ENCODE measurements at regions of chr7 and their contacts with region 1.

Region 1: GRCh38 chr7:99631295-99632109 is 14.8 kb downstream of the ZSCAN25 start:
- DNase-seq: peak; percentile 64
- ATAC-seq: peak; percentile 89
- H3K4me3 ChIP-seq: no peak overlapping the region
- H3K27ac ChIP-seq: peak overlapping the region; percentile 10
- H3K4me1 ChIP-seq: peaks cover 24% of the 10 kb centered on the region
- H3K27me3 ChIP-seq: no peaks in the 10 kb centered on the region
- CTCF ChIP-seq: peak; percentile 86
- EP300 ChIP-seq: 0 out of 4 replicates have a peak, but pooled peaks of 1 of the 2 experiments have one; percentile 17
- POLR2A ChIP-seq: no peak
- RAD21 ChIP-seq: peak; percentile 90

Region 2: DNA sequence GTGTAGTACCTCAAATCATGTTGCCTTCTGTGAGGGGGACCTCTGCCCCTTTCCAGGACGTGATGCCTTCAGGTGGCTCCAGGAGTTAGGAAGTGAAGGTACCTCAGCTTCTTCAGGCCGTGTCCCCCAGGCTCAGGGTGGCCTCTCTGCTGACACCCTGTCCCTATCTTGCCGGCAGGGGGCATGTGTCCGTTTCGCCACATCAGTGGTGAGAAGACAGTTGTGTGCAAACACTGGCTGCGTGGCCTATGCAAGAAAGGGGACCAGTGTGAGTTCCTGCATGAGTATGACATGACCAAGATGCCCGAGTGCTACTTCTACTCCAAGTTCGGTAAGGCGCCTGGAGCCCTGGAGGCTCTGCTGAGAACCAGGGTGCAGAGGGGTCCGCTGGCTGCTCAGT is 183.6 kb before region 1 on chr7:
- CTCF ChIA-PET with region 1: no interaction called
- POLR2A ChIA-PET with region 1: no interaction called
- in situ Hi-C with region 1: no loop called
- intact Hi-C with region 1: no loop called
- DNase-seq: peak; percentile 51
- ATAC-seq: peak; percentile 82
- H3K4me3 ChIP-seq: no peak overlapping the region
- H3K27ac ChIP-seq: no peak overlapping the region
- H3K4me1 ChIP-seq: no peaks in the 10 kb centered on the region
- H3K27me3 ChIP-seq: no peaks in the 10 kb centered on the region
- CTCF ChIP-seq: peak; percentile 80
- EP300 ChIP-seq: no peak
- POLR2A ChIP-seq: no peak
- RAD21 ChIP-seq: peak; percentile 47

Region 3: GRCh38 chr7:99616359-99617191 is 14.9 kb before region 1 on chr7 and contains the start of gene ZSCAN25:
- CTCF ChIA-PET with region 1: no interaction called
- POLR2A ChIA-PET with region 1: interaction called, 16 read pairs
- in situ Hi-C with region 1: no loop called
- intact Hi-C with region 1: no loop called
- DNase-seq: peak; percentile 91
- ATAC-seq: peak; percentile 96
- H3K4me3 ChIP-seq: peak within 1 kb of the TSS; percentile 93 to 98 (median 96)
- H3K27ac ChIP-seq: peak within 1 kb of the TSS; percentile 96
- H3K4me1 ChIP-seq: peaks cover 25% of the 10 kb centered on the region
- H3K27me3 ChIP-seq: no peaks in the 10 kb centered on the region; a peak in 1 of 5 replicates
- CTCF ChIP-seq: peak; percentile 97
- EP300 ChIP-seq: no peak
- POLR2A ChIP-seq: peak; percentile 82 to 83
- RAD21 ChIP-seq: peak; percentile 71
- total RNA-seq, gene ZSCAN25: 16.3 and 16.8 TPM in 2 replicates

Region 4: GRCh38 chr7:99837649-99838361 is 206.3 kb after region 1 on chr7:
- CTCF ChIA-PET with region 1: interaction called, 4 read pairs
- POLR2A ChIA-PET with region 1: interaction called, 3 read pairs
- in situ Hi-C with region 1: no loop called
- intact Hi-C with region 1: loop called (anchors 2 kb)
- DNase-seq: peak; percentile 45
- ATAC-seq: peak; percentile 72
- H3K4me3 ChIP-seq: no peak overlapping the region
- H3K27ac ChIP-seq: no peak overlapping the region
- H3K4me1 ChIP-seq: peaks cover 34% of the 10 kb centered on the region
- H3K27me3 ChIP-seq: no peaks in the 10 kb centered on the region
- CTCF ChIP-seq: peak; percentile 74
- EP300 ChIP-seq: no peak
- POLR2A ChIP-seq: no peak
- RAD21 ChIP-seq: peak; percentile 59; the same call in 1 of the 2 replicates

Region 5: DNA sequence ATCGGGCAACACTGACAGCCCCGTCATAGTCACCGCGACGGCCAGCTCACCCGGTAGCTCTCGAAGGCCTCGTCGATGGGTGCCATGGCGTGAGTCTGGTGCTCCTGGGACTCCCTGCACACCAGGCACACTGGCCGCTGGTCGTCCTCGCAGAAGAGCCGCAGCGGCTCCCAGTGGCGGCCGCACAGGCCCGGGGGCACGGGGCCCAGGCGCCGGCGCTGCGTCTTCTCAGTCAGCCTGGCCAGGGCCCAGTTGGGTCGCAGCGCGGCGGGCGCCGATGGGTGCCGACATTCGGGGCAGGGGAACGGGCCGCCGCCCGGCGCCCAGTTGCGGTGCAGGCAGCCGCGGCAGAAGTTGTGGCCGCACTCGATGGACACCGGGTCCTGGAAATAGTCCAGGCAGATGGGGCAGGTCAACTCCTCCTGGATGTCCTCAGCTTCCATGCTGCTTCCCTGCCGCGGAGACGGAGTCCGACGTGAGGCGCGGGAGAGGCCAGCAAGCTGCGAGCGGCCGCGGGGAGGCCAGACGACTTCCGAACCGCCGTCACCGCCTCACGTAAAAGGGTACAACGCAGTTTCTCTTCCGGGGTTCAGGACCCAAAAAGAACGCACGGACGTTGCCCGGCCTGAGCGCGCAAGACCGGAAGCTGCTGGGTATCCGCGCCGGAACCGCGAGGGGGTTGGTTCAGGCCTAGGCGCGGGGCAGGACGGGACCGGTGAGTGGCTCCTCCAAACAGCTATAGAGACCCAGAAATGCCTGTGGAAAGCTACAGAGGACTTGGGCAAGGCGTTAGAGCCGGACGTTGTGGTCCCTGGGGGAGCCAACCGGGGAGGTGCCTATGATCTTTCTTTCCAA is 287.7 kb after region 1 on chr7 and contains the start of gene TRIM4:
- CTCF ChIA-PET with region 1: no interaction called
- POLR2A ChIA-PET with region 1: interaction called, 4 read pairs
- in situ Hi-C with region 1: no loop called
- intact Hi-C with region 1: loop called (anchors 10 kb)
- DNase-seq: peak; percentile 90
- ATAC-seq: peak; percentile 99
- H3K4me3 ChIP-seq: peak within 1 kb of the TSS; percentile 82 to 90 (median 86)
- H3K27ac ChIP-seq: peak within 1 kb of the TSS; percentile 90
- H3K4me1 ChIP-seq: peaks cover 35% of the 10 kb centered on the region
- H3K27me3 ChIP-seq: no peaks in the 10 kb centered on the region; a peak in 1 of 5 replicates
- CTCF ChIP-seq: peak; percentile 67
- EP300 ChIP-seq: no peak; a peak in 1 of 4 replicates
- POLR2A ChIP-seq: peak; percentile 84 to 85
- RAD21 ChIP-seq: peak; percentile 67
- total RNA-seq, gene TRIM4: 21.7 and 25.1 TPM in 2 replicates

Region 6: GRCh38 chr7:100049441-100050311 is 418.2 kb after region 1 on chr7 and contains the start of gene ZSCAN21:
- CTCF ChIA-PET with region 1: no interaction called
- POLR2A ChIA-PET with region 1: no interaction called
- in situ Hi-C with region 1: no loop called
- intact Hi-C with region 1: loop called (anchors 1 kb)
- DNase-seq: peak; percentile 75
- ATAC-seq: peak; percentile 92
- H3K4me3 ChIP-seq: peak within 1 kb of the TSS; percentile 62 to 80 (median 76)
- H3K27ac ChIP-seq: peak within 1 kb of the TSS; percentile 77
- H3K4me1 ChIP-seq: peaks cover 29% of the 10 kb centered on the region
- H3K27me3 ChIP-seq: no peaks in the 10 kb centered on the region
- CTCF ChIP-seq: peak; percentile 62
- EP300 ChIP-seq: no peak
- POLR2A ChIP-seq: peak; percentile 73 to 75
- RAD21 ChIP-seq: no peak
- total RNA-seq, gene ZSCAN21: 10.0 and 11.8 TPM in 2 replicates

Measured in HepG2 (cell line).